GM13976 (cell line): ENCODE measurements at regions of chr12 and their contacts with region 1.

Region 1: DNA sequence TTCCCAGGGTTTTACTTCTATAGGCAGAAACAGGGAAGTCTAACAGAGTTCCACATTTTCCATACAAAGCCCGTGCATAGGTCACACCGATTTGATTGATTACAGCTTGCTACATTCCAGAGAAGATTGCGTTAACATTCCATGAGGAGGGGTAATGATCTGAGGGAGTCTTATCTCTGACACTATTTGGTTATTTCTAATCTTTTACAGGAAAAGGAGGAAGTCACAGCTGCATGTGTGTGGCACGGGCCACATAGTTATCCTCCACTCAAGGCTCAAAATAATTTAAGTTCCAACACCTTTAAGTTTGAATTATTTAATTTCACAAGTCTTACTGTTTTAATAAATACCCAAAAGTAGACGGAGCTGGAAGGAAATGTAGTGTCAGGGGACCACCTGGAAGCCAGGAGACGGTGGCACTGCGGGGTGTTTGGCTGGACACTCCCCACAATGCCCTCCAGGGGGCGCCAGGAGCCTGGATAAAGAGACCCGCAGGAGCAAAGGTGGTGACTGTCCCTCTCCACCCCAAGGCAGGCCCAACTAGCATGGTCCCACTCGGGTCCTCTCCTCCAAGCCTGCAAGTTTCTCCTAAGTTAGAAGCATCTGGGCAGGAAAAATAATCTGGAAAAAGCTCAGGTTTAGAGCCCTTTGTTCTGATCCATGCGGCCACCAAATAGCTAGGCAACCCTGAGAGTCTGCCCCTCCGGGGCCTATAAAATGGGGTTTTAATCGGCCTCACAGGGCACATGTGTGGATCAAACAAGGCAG is 20.2 kb downstream of the KRT8 start:
- DNase-seq: peak; percentile 83
- CTCF ChIP-seq: peak; percentile 74

Region 2: DNA sequence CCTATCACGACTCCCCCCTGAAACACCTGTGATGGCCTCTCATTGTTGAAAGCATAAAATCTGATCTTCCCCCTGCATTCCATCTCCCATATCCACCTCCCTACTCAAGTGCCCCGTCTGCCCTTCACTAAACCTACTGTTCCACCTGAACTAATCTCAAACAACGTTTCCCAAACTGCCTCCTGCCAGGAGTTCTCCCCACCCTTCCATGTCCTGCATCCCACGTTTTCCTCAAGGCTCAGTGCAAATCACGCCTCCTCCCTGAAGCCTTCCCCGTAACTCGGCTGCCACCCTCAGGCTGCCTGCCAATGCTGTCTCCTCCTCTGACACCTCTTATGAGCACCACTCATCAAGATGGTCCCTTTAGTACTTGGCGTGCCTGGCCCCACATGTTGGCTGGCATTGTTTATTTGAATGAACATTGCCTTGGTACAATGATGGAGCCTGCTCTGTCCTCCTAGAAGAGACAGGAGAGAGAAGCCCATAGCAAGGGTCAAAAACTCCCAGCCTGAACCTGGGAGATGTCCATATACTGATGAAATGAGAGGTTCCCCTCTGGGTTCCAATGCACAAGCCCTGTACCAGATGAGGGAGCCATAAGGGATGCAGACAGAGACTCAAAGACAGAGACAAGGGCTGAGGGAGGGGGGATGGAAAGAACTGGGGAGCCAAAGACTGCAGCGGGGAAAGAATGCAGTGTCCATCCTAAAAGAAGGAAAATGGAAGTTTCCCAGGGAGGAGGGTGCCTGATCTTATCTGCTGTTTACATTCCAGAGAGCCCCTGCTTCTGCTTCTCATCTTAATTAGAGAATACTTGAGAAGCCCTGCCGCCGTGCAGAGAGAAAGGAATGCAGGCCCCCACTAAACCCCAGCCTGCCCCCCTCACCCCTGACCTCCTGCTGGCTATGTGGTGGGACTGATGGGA is 91.7 kb after region 1 on chr12:
- in situ Hi-C with region 1: loop called (anchors 5 kb)
- DNase-seq: no peak
- CTCF ChIP-seq: no peak